ENCODE measurements at regions of chr10 and their contacts with region 1.

Region 1: GRCh38 chr10:116417821-116418220 is 9.8 kb upstream of the PNLIPRP3 start:
- DNase-seq: peak; percentile 90
- H3K4me3 ChIP-seq: no peak overlapping the region
- H3K27ac ChIP-seq: peak overlapping the region; percentile 95
- H3K4me1 ChIP-seq: peaks cover 43% of the 10 kb centered on the region
- H3K27me3 ChIP-seq: no peaks in the 10 kb centered on the region
- CTCF ChIP-seq: no peak

Region 2: GRCh38 chr10:116353817-116354216 is 64.0 kb before region 1 on chr10:
- CTCF ChIA-PET with region 1: no interaction called
- dilution Hi-C with region 1: no loop called
- in situ Hi-C with region 1: no loop called
- intact Hi-C with region 1: loop called (anchors 5 kb)
- DNase-seq: peak; percentile 88
- H3K4me3 ChIP-seq: no peak overlapping the region
- H3K27ac ChIP-seq: peak overlapping the region; percentile 56
- H3K4me1 ChIP-seq: peaks cover 10% of the 10 kb centered on the region
- H3K27me3 ChIP-seq: no peaks in the 10 kb centered on the region
- CTCF ChIP-seq: no peak

Region 3: DNA sequence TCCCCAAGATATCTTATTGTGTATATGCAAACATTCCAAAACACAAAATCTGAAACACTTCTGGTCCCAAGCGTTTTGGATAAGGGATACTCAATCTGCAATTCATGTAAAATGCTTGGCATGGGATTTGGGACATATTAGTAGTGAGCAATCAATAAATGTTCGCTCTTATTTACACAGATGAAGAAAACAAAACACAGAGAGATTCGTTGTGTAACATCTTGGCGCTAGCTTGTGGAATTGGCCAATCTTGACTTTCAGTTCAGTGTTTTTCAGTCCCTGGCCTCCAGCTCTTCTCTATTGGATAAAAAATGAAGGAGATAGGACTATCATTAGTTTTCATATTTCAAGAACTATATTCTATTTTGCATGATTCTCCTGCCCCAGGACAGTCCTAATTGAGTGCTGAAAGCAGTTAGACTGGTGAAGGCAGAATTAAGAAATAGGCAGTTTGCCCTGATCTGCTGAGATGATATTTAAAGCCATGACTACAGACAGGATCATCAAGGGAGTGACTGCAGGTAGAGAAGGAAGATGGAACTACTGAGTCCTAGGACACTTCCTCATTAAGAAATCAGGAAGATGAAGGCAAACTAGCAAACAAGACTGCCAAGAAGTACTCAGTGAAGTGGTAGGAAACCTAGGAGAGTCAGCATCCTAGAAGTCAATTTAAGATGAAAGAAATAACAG is 11.6 kb after region 1 on chr10:
- CTCF ChIA-PET with region 1: no interaction called
- dilution Hi-C with region 1: no loop called
- in situ Hi-C with region 1: no loop called
- intact Hi-C with region 1: loop called (anchors 1 kb)
- DNase-seq: peak; percentile 65
- H3K4me3 ChIP-seq: peak overlapping the region; percentile 54 to 100 (median 98)
- H3K27ac ChIP-seq: peak overlapping the region; percentile 97
- H3K4me1 ChIP-seq: peaks cover 43% of the 10 kb centered on the region
- H3K27me3 ChIP-seq: no peaks in the 10 kb centered on the region
- CTCF ChIP-seq: no peak

Region 4: GRCh38 chr10:116490028-116490662 is 72.3 kb after region 1 on chr10:
- CTCF ChIA-PET with region 1: no interaction called
- dilution Hi-C with region 1: no loop called
- in situ Hi-C with region 1: no loop called
- intact Hi-C with region 1: no loop called
- DNase-seq: no peak
- H3K4me3 ChIP-seq: no peak overlapping the region
- H3K27ac ChIP-seq: no peak overlapping the region
- H3K4me1 ChIP-seq: no peaks in the 10 kb centered on the region
- H3K27me3 ChIP-seq: no peaks in the 10 kb centered on the region
- CTCF ChIP-seq: peak; percentile 56 to 74

Region 5: GRCh38 chr10:116674901-116675423 is 257.1 kb after region 1 on chr10:
- CTCF ChIA-PET with region 1: no interaction called
- dilution Hi-C with region 1: no loop called
- in situ Hi-C with region 1: no loop called
- intact Hi-C with region 1: no loop called
- DNase-seq: no peak
- H3K4me3 ChIP-seq: no peak overlapping the region
- H3K27ac ChIP-seq: no peak overlapping the region
- H3K4me1 ChIP-seq: peaks cover 16% of the 10 kb centered on the region
- H3K27me3 ChIP-seq: no peaks in the 10 kb centered on the region
- CTCF ChIP-seq: no peak

Measured in mammary epithelial cell (primary cell).